ENCODE measurements at regions of chr6 and their contacts with region 1.

Region 1: DNA sequence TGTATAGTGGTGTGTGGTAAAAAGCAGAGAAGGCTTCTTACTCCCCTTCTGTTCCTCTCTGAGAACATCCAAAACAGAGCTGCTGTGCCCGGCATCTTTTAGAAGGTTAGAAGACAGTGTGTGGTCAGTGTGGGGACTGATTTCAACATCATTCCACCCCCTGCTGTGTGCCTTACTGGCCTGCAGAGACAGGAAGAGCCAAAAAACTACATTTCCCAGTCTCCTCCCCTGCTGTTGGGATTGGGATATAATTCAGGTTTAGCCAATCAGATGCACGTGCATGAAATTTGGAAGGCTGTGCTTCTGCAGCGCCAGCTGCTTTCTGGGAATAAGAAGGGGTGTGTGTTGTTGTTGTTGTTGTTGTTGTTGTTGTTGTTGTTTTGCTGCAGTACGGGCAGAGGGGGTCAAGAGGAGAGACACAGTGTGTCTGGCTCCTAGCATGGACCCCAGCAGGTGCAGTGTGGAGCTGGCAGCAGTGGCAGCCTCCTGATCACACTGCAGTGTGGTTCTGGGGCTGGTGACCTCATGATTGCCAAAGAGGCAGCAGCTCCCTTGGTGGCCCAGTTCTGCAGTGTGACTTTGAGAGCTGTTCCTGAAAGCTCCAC is 74.7 kb downstream of the MRPL14 start:
- DNase-seq: no peak
- H3K4me3 ChIP-seq: no peak overlapping the region
- H3K27ac ChIP-seq: no peak overlapping the region
- H3K4me1 ChIP-seq: peaks cover 0 to 14% (median 4%) of the 10 kb centered on the region in 4 experiments; a peak in 6 of 7 replicates
- H3K27me3 ChIP-seq: no peaks in the 10 kb centered on the region
- CTCF ChIP-seq: no peak
- EP300 ChIP-seq: no peak
- POLR2A ChIP-seq: no peak
- RAD21 ChIP-seq: no peak

Region 2: GRCh38 chr6:44041461-44042260 is 10.9 kb before region 1 on chr6:
- CTCF ChIA-PET with region 1: interaction called, 6 read pairs
- POLR2A ChIA-PET with region 1: interaction called, 35 read pairs
- DNase-seq: peak in 1 of 2 experiments; percentile 68
- H3K4me3 ChIP-seq: no peak overlapping the region
- H3K27ac ChIP-seq: 0 out of 2 replicates have a peak overlapping the region, but pooled peaks have one; percentile 21
- H3K4me1 ChIP-seq: peaks cover 9 to 27% (median 15%) of the 10 kb centered on the region in 4 experiments
- H3K27me3 ChIP-seq: no peaks in the 10 kb centered on the region
- CTCF ChIP-seq: no peak
- EP300 ChIP-seq: no peak
- POLR2A ChIP-seq: no peak
- RAD21 ChIP-seq: no peak

Measured in H1 (cell line).